Colonic mucosa (tissue), 4 donors: ENCODE measurements at regions of chr4 and their contacts with region 1.

Region 1: GRCh38 chr4:26459054-26459755 is 31.1 kb downstream of the CCKAR start:
- DNase-seq: no peak
- H3K4me3 ChIP-seq: no peak overlapping the region
- H3K27ac ChIP-seq: no peak overlapping the region
- H3K4me1 ChIP-seq: no peaks in the 10 kb centered on the region
- H3K27me3 ChIP-seq: no peaks in the 10 kb centered on the region
- CTCF ChIP-seq: peak; percentile 30

Region 2: GRCh38 chr4:26410385-26411293 is 48.6 kb before region 1 on chr4:
- intact Hi-C with region 1: no loop called
- DNase-seq: peak; percentile 49
- H3K4me3 ChIP-seq: no peak overlapping the region
- H3K27ac ChIP-seq: no peak overlapping the region
- H3K4me1 ChIP-seq: no peaks in the 10 kb centered on the region
- H3K27me3 ChIP-seq: no peaks in the 10 kb centered on the region
- CTCF ChIP-seq: peak; percentile 49

Region 3: DNA sequence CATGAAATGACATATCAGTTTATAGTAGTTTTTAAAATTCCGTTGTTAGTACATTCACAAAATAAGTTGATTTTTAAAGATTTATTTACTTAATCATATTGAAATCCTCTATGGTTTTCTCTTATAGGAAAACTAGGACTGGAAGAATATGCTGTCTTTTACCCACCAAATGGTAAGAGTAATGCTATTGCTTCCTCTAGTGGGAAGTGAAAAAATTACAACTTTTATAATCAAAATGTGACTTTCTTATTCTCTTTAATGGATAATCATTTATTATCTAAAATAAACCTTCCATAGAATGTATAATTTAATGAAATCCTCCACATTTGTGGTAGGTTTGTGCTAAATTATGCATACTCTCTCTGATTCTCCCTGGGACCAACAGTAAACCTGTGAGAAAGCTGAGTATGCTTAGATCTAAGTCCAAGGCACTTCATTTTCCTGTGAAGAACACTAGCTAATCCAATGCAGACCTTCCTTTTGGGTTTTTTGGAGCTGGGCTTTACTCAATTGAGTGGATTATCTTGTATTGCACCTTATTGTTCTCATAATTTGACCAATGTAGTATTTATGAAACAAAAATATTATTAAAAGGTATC is 260.8 kb after region 1 on chr4:
- intact Hi-C with region 1: loop called (anchors 5 kb)
- DNase-seq: no peak
- H3K4me3 ChIP-seq: no peak overlapping the region
- H3K27ac ChIP-seq: no peak overlapping the region
- H3K4me1 ChIP-seq: no peaks in the 10 kb centered on the region
- H3K27me3 ChIP-seq: no peaks in the 10 kb centered on the region
- CTCF ChIP-seq: peak; percentile 31

Region 4: DNA sequence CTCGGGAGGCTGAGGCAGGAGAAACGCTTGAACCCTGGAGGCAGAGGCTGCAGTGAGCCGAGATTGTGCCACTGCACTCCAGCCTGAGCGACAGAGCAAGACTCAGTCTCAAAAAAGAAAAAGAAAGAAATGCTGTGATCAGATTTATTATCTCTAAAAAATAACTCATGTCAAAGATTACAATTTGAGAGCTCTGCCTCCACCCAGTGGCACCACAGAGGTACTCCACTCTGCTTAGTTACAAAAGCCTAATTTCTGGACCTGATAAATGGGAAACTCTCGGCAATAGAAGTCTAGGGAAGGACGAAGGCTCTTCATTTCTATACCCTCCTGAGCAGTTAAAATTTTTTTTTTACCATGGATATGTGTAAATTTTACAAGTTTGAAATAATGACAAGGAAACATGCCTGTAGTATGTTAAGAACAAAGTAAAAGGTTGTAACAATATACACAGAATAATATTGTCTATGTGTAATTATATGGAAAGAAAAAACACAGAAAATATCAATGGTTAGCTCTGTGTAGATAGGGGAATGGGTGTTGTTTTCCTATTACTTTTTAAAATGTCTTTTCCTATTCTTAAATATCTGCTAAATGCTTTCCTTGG is 551.2 kb after region 1 on chr4:
- intact Hi-C with region 1: loop called (anchors 5 kb)
- DNase-seq: peak; percentile 53
- H3K4me3 ChIP-seq: no peak overlapping the region
- H3K27ac ChIP-seq: no peak overlapping the region
- H3K4me1 ChIP-seq: no peaks in the 10 kb centered on the region
- H3K27me3 ChIP-seq: no peaks in the 10 kb centered on the region
- CTCF ChIP-seq: peak; percentile 89